CD8-positive, alpha-beta T cell (primary cell): ENCODE measurements at regions of chr5 and their contacts with region 1.

Region 1: DNA sequence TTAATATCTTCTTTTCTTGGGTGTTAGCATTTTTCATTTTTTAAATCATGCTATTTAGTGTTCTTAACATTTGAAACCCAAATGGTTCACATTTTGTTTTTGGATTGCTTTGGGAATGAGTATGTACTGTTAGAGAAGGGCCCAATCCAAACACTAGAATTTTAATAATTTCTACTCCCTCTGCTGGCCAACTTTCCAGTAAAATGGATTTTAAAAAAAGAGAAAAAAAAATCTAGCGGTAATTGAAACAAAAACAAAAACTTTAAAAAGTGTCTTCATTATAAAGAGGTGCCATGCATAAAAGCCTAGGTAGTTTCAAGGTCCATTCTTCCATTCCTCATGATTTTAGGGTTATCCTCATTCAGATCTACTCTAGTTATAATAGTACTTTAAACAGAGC is 32.1 kb upstream of the RICTOR start:
- DNase-seq: peak in 2 of 9 experiments; percentile 8 to 42
- ATAC-seq: no peak
- H3K4me3 ChIP-seq: no peak overlapping the region
- H3K4me3 Mint-ChIP-seq: no peak overlapping the region
- H3K27ac ChIP-seq: no peak overlapping the region
- H3K27ac Mint-ChIP-seq: peak overlapping the region; percentile 74
- H3K4me1 ChIP-seq: no peaks in the 10 kb centered on the region
- H3K4me1 Mint-ChIP-seq: peaks cover 13% of the 10 kb centered on the region
- H3K27me3 ChIP-seq: no peaks in the 10 kb centered on the region
- H3K27me3 Mint-ChIP-seq: no peaks in the 10 kb centered on the region
- CTCF ChIP-seq: peak; percentile 34

Region 2: DNA sequence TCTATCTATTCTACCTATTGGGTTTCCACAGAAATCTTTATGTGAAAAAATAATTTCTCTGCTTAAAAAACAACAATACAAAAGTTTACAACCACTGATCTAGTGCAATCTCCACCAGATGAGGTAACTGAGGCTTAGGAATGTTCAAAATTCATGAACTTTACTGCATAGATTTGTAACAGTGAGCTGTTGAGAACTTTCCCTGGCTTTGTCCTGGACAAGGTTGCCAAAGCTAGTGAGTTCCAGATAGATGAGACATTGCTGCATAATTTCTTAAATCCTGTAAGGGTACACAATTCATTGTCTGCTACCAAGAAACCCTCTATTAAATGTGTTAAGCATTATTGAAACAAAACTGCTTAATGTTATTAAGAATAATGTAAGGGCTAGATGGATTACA is 157.8 kb before region 1 on chr5:
- CTCF ChIA-PET with region 1: interaction called, 3 read pairs
- POLR2A ChIA-PET with region 1: no interaction called
- intact Hi-C with region 1: loop called in 1 of 2 experiments (anchors 5 kb)
- DNase-seq: no peak
- ATAC-seq: no peak
- H3K4me3 ChIP-seq: no peak overlapping the region
- H3K4me3 Mint-ChIP-seq: no peak overlapping the region
- H3K27ac ChIP-seq: no peak overlapping the region
- H3K27ac Mint-ChIP-seq: no peak overlapping the region
- H3K4me1 ChIP-seq: no peaks in the 10 kb centered on the region
- H3K4me1 Mint-ChIP-seq: no peaks in the 10 kb centered on the region
- H3K27me3 ChIP-seq: no peaks in the 10 kb centered on the region
- H3K27me3 Mint-ChIP-seq: no peaks in the 10 kb centered on the region
- CTCF ChIP-seq: no peak

Region 3: DNA sequence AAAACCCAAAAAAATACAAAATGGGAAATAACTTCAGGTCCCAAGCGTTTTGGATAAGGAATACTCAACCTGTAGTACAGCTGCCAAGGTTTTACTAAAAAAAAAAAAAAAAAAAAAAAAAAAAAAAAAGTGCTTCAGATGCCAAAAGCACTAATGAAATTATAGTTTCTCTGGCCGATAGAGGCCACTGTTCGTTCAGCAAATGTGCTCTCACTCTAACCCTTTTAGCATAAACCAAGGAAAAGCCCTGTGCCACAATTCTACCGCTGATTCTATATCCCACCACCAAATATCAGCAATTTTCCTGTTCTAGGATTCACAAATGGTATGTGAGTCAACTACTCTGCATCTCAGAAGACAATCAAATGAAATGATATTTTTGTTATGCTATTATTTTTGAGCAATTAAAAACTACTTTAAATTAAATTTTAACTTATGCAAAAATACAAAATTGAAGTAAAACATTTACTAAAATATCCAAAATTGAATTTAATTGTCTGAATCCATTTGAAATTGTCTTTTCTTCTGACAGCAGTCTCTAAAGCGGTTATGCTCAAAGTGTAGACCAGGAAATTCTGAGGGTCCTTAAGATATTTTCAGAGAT is 111.9 kb before region 1 on chr5:
- CTCF ChIA-PET with region 1: no interaction called
- POLR2A ChIA-PET with region 1: no interaction called
- intact Hi-C with region 1: loop called (anchors 2 kb)
- DNase-seq: peak in 5 of 9 experiments; percentile 15 to 76 (median 41)
- ATAC-seq: peak; percentile 74
- H3K4me3 ChIP-seq: no peak overlapping the region
- H3K4me3 Mint-ChIP-seq: no peak overlapping the region
- H3K27ac ChIP-seq: no peak overlapping the region
- H3K27ac Mint-ChIP-seq: no peak overlapping the region
- H3K4me1 ChIP-seq: no peaks in the 10 kb centered on the region
- H3K4me1 Mint-ChIP-seq: peaks cover 27% of the 10 kb centered on the region
- H3K27me3 ChIP-seq: no peaks in the 10 kb centered on the region
- H3K27me3 Mint-ChIP-seq: no peaks in the 10 kb centered on the region
- CTCF ChIP-seq: peak; percentile 39

Region 4: GRCh38 chr5:39074016-39074886 is 32.1 kb before region 1 on chr5 and contains the start of gene RICTOR:
- CTCF ChIA-PET with region 1: interaction called, 19 read pairs
- POLR2A ChIA-PET with region 1: no interaction called
- intact Hi-C with region 1: loop called (anchors 2 to 5 kb)
- DNase-seq: peak; percentile 85 to 94 (median 91)
- ATAC-seq: peak; percentile 71
- H3K4me3 ChIP-seq: peak within 1 kb of the TSS; percentile 81 to 95
- H3K4me3 Mint-ChIP-seq: peak within 1 kb of the TSS; percentile 97
- H3K27ac ChIP-seq: peak within 1 kb of the TSS; percentile 92 to 94
- H3K27ac Mint-ChIP-seq: peak within 1 kb of the TSS; percentile 96
- H3K4me1 ChIP-seq: peaks cover 36% of the 10 kb centered on the region
- H3K4me1 Mint-ChIP-seq: peaks cover 46% of the 10 kb centered on the region
- H3K27me3 ChIP-seq: peaks cover 10 to 11% of the 10 kb centered on the region in 2 experiments
- H3K27me3 Mint-ChIP-seq: peaks cover 25% of the 10 kb centered on the region
- CTCF ChIP-seq: no peak
- total RNA-seq, gene RICTOR: 116 to 128 TPM

Region 5: DNA sequence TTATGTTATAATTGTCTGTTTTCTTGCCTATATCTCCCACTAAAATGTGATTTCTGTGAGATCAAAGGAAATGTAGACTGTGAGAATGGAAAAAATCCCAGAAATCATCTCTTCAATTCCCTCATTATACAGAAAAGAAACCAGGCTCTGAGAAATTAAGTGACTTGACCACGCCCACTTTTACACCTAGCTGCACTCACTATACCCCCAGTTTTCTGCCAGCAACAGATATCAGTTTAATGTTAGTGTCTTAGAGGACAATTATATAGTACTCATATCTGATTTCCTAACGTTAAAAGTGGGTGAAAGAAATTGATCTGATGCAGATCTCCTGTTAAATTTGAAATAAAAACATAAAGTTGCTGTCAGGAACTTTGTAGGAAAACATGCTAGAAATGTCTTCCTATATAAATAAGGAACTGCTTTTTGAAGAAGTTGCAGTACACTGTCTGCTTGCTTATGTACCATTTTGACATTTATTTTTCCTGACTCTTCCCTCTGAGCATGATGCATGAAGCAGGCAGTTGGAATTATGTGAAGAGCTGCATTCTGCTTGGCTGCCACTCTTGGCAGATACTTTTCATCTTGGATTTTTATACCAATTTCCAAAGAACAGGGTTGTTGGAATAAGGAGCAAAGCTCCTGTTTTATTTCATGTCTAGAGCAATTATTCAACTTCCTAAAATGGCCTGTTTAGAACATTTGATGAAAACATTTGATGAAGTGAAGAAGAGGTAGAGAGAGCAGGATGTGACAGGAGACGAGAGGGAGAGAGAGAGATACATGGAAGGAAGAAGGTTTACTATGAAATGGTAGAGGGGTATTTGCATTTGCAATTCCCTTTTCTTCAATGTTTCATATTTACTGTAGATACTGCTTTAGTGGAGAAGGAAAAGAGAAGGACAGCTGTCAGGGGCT is 25.1 kb after region 1 on chr5:
- CTCF ChIA-PET with region 1: no interaction called
- POLR2A ChIA-PET with region 1: interaction called, 3 read pairs
- intact Hi-C with region 1: loop called in 1 of 2 experiments (anchors 2 kb)
- DNase-seq: no peak
- ATAC-seq: no peak
- H3K4me3 ChIP-seq: no peak overlapping the region
- H3K4me3 Mint-ChIP-seq: no peak overlapping the region
- H3K27ac ChIP-seq: peak overlapping the region in 1 of 2 experiments; percentile 12
- H3K27ac Mint-ChIP-seq: peak overlapping the region; percentile 70
- H3K4me1 ChIP-seq: no peaks in the 10 kb centered on the region
- H3K4me1 Mint-ChIP-seq: peaks cover 55% of the 10 kb centered on the region
- H3K27me3 ChIP-seq: no peaks in the 10 kb centered on the region
- H3K27me3 Mint-ChIP-seq: no peaks in the 10 kb centered on the region
- CTCF ChIP-seq: no peak